RWPE1 (cell line): ENCODE measurements at regions of chr14 and their contacts with region 1.

Region 1: GRCh38 chr14:93115069-93115820 is 480 bp downstream of the ITPK1 start:
- DNase-seq: peak; percentile 79
- H3K27ac ChIP-seq: peak overlapping the region; percentile 96
- CTCF ChIP-seq: no peak

Region 2: GRCh38 chr14:92922883-92923743 is 192.1 kb before region 1 on chr14 and contains the start of gene CHGA:
- CTCF ChIA-PET with region 1: no interaction called
- POLR2A ChIA-PET with region 1: no interaction called
- DNase-seq: peak; percentile 67
- H3K27ac ChIP-seq: no peak within 1 kb of the TSS
- CTCF ChIP-seq: no peak

Region 3: DNA sequence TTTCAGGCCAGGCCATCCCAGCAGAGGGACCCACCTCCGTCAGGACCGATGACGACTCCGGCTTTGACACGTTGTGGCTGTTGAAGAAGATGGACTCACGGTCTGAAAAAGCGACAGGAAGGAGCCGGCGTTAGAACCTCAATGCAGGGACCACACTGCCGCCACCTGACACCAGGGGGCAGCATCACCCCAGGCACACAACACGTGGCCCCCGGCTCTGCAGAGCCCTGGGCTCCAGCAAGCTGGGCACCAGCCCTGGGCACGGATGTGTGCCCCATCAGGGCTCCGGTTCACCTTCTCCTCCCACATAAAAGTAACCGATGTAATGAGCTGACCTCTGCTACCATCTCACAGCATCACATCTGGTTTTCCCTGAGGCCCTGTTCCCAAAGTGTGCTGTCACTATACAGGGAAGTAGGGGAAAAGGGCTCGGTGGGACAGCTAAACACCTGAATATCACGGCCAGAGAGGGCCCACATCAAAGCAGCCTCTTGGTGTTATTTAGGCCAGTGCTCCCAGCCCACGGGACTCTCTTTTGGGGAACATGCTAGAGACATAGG is 163.3 kb before region 1 on chr14:
- CTCF ChIA-PET with region 1: interaction called, 10 read pairs
- POLR2A ChIA-PET with region 1: no interaction called
- DNase-seq: peak; percentile 63
- H3K27ac ChIP-seq: peak overlapping the region; percentile 32; the same call in 1 of the 2 replicates
- CTCF ChIP-seq: peak; percentile 92

Region 4: GRCh38 chr14:93137864-93138263 is 22.6 kb after region 1 on chr14:
- CTCF ChIA-PET with region 1: interaction called, 13 read pairs
- POLR2A ChIA-PET with region 1: no interaction called
- DNase-seq: no peak
- H3K27ac ChIP-seq: no peak overlapping the region
- CTCF ChIP-seq: no peak